Activated B cell treated with CpG ODN at 0.5 μM for 24 hours (primary cell): ENCODE measurements at regions of chr16 and their contacts with region 1.

Region 1: GRCh38 chr16:30813821-30814189 is 26.8 kb upstream of the ZNF629 start:
- DNase-seq: no peak
- ATAC-seq: no peak
- H3K4me3 Mint-ChIP-seq: peak overlapping the region; percentile 84
- H3K27ac Mint-ChIP-seq: peak overlapping the region; percentile 75
- H3K4me1 Mint-ChIP-seq: peaks cover 13% of the 10 kb centered on the region
- H3K27me3 Mint-ChIP-seq: no peaks in the 10 kb centered on the region
- CTCF ChIP-seq: no peak

Region 2: DNA sequence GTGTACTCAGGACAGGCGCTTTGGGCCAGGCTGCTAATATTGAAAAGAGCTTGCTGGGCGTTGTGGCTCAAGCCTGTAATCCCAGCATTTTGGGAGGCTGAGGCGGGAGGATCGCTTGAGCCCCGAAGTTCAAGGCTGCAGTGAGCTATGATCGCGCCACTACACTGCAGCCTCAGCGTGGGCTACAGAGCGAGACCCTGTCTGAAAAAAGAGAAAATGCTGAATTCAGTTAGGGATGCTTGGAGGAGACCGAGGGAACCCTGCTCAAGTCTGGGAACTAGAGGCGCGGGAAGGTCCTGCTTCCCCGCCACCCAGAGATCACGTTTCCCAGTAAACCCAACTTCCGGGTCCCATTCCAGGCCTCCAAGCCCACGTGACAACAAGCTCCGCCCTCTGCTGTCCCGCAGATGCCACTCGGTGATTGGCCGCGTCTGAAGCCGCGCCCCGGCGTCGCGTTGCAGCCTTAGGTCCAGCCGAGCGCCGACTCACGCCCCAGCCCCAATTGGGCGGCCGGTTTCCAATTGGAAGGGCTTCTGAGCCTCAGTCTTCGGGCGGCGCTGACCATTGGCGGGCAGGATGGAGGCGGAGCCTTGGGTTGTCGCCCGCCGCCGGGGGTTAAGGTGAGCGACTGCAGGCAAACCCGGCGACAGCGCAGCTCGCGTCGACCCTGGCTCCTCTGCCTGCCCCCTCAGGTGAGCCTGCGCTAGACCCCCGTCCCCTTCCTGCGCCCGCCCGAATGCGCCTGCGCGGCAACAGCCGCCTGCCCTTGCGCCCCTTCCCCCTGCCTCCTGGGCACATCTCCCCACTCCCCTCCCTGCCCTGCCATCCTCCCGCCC is 65.8 kb before region 1 on chr16 and contains the start of gene PHKG2:
- CTCF ChIA-PET with region 1: interaction called, 7 read pairs
- POLR2A ChIA-PET with region 1: interaction called, 13 read pairs
- intact Hi-C with region 1: loop called (anchors 5 kb)
- DNase-seq: peak; percentile 90
- ATAC-seq: peak; percentile 98
- H3K4me3 Mint-ChIP-seq: peak within 1 kb of the TSS; percentile 91
- H3K27ac Mint-ChIP-seq: peak within 1 kb of the TSS; percentile 87
- H3K4me1 Mint-ChIP-seq: peaks cover 24% of the 10 kb centered on the region
- H3K27me3 Mint-ChIP-seq: no peaks in the 10 kb centered on the region
- CTCF ChIP-seq: no peak
- total RNA-seq, gene PHKG2: 45.3 and 51.4 TPM in 2 replicates

Region 3: GRCh38 chr16:30775392-30776188 is 38.2 kb before region 1 on chr16:
- CTCF ChIA-PET with region 1: no interaction called
- POLR2A ChIA-PET with region 1: interaction called, 12 read pairs
- intact Hi-C with region 1: loop called (anchors 5 kb)
- DNase-seq: peak; percentile 48
- ATAC-seq: peak; percentile 82
- H3K4me3 Mint-ChIP-seq: peak overlapping the region; percentile 89
- H3K27ac Mint-ChIP-seq: peak overlapping the region; percentile 61
- H3K4me1 Mint-ChIP-seq: peaks cover 21% of the 10 kb centered on the region
- H3K27me3 Mint-ChIP-seq: peaks cover 11% of the 10 kb centered on the region
- CTCF ChIP-seq: no peak

Region 4: GRCh38 chr16:30797670-30798309 is 16.0 kb before region 1 on chr16:
- CTCF ChIA-PET with region 1: no interaction called
- POLR2A ChIA-PET with region 1: no interaction called
- intact Hi-C with region 1: no loop called
- DNase-seq: no peak
- ATAC-seq: no peak
- H3K4me3 Mint-ChIP-seq: no peak overlapping the region
- H3K27ac Mint-ChIP-seq: no peak overlapping the region
- H3K4me1 Mint-ChIP-seq: peaks cover 2% of the 10 kb centered on the region
- H3K27me3 Mint-ChIP-seq: no peaks in the 10 kb centered on the region
- CTCF ChIP-seq: no peak

Region 5: DNA sequence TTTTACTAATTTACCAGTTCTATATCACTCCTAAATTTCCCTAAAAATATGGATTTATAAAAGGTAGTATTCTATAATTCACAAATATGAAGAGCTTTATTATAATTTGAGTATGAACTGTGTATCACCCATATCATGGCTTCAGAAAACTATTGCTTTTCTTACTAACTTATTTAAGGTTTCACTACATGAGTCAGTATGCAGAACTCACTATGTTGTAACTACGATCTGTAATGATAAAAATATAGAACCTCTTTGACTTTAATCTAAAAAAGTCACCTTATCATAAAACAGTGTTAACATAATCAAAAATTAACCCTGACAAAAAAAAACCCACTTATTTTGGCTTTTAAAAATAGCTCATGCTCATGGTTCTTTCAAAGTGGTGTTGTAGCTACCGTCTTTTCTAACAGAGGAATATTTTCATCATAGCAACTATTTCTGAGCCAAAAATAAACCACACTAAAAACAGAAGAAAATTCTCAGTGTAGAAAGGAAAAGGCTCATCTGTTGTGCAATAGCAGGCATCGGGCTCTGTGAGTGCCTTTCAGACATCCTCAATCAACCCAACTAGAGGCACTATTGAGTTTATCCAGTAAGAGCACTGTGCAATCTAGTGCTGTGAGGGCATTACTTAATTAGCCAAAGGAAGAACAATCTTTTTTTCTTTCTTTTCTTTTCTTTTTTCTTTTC is 488.0 kb after region 1 on chr16:
- CTCF ChIA-PET with region 1: no interaction called
- POLR2A ChIA-PET with region 1: no interaction called
- intact Hi-C with region 1: no loop called
- DNase-seq: no peak
- ATAC-seq: peak; percentile 56
- H3K4me3 Mint-ChIP-seq: no peak overlapping the region
- H3K27ac Mint-ChIP-seq: no peak overlapping the region
- H3K4me1 Mint-ChIP-seq: peaks cover 17% of the 10 kb centered on the region
- H3K27me3 Mint-ChIP-seq: no peaks in the 10 kb centered on the region
- CTCF ChIP-seq: no peak